HEK293 (cell line): ENCODE measurements at regions of chr6 and their contacts with region 1.

Region 1: GRCh38 chr6:167968091-167968490 is 29.4 kb upstream of the KIF25 start:
- H3K4me3 ChIP-seq: no peak overlapping the region
- H3K27ac ChIP-seq: no peak overlapping the region
- H3K4me1 ChIP-seq: no peaks in the 10 kb centered on the region
- CTCF ChIP-seq: no peak

Region 2: GRCh38 chr6:167892835-167893815 is 75.0 kb before region 1 on chr6:
- CTCF ChIA-PET with region 1: interaction called, 11 read pairs
- POLR2A ChIA-PET with region 1: no interaction called
- H3K4me3 ChIP-seq: no peak overlapping the region
- H3K27ac ChIP-seq: no peak overlapping the region
- H3K4me1 ChIP-seq: no peaks in the 10 kb centered on the region
- CTCF ChIP-seq: no peak

Region 3: DNA sequence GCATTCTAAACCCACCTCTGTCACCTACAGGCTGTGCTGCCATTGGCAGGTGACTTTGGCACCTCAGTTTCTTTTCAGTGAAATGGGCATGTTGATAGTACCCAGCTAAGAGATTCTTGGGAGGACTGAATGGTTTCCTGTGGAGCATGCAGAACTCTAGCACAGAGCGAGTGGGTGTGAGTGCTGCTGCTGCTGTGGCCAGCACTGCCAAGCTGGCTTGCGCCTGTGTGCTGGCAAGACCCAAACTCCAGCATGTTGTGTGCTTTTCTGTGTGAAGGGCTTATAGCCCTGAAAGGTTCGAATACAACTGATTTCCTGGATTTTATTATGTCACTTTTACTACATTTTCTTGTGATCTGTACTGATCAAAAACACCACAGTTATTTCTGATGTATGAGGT is 48.7 kb before region 1 on chr6:
- CTCF ChIA-PET with region 1: interaction called, 11 read pairs
- POLR2A ChIA-PET with region 1: no interaction called
- H3K4me3 ChIP-seq: no peak overlapping the region
- H3K27ac ChIP-seq: no peak overlapping the region
- H3K4me1 ChIP-seq: no peaks in the 10 kb centered on the region
- CTCF ChIP-seq: no peak

Region 4: DNA sequence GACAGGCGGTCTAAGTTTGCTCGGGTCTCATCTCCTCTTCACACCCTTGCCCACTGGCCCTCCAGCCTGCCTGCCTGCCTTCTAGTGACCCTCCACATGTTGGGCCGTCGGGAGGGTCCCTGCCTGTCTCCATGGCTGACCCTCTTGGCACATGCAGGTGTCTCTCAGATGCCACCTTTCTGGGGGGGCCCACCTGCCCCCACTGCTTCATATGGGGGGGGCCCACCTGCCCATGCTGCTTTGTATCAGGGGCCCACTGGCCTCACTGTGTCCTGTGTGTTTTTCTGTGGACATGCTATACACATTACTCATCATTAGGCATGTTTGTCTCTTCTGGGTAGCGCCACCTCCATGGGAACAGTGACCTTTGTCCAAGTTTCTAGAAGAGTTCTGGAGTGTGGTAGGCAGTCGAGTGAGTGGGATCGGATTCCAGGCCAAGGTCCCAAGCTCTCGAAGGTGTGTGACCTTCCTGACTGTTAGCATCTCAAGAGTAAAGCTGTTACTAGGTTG is 11.1 kb before region 1 on chr6:
- CTCF ChIA-PET with region 1: interaction called, 20 read pairs
- POLR2A ChIA-PET with region 1: no interaction called
- H3K4me3 ChIP-seq: no peak overlapping the region
- H3K27ac ChIP-seq: no peak overlapping the region
- H3K4me1 ChIP-seq: peaks cover 6% of the 10 kb centered on the region
- CTCF ChIP-seq: no peak